Posterior cingulate gyrus (tissue), 11 donors: ENCODE measurements at regions of chr4 and their contacts with region 1.

Region 1: GRCh38 chr4:25159884-25160713 is at the start of gene SEPSECS:
- DNase-seq: peak; percentile 86 to 98 (median 92)

Region 2: DNA sequence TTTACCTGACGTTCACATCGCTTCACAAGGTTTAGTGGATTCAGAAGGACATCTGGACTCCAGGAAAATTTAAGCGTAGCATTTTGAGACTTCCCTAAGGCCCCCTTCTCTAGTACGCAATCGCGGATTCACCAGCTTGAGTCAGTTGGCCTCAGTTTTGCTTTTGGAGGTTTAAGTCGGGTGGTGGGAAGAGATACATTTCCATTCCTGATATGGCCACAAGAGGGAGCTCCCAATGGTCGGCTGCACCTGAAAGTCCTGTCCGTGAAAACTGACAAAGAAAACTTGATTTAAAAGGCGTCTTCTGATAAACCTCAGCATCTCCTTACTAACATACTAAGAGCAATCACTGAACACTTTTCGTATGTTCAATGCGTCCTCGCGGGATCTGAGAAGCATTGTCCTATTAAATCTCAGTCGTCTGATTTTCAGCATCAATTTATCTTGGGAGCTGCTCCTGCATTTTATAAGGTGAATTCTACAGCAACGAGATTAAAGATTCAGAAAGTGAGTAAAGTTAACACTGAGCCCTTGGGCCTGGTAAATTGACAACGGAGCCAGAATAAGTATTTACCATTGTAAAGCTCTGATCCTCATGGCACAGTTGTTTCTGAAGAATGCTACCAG is 179.9 kb before region 1 on chr4:
- intact Hi-C with region 1: loop called (anchors 5 kb)
- DNase-seq: peak in 6 of 10 donors; percentile 31 to 87 (median 42)

Region 3: GRCh38 chr4:25144870-25145481 is 15.1 kb before region 1 on chr4:
- intact Hi-C with region 1: no loop called
- DNase-seq: no peak

Region 4: GRCh38 chr4:25234390-25235370 is 74.6 kb after region 1 on chr4:
- intact Hi-C with region 1: loop called (anchors 5 kb)
- DNase-seq: peak; percentile 21 to 92 (median 42)

Region 5: GRCh38 chr4:25312496-25313200 is 152.5 kb after region 1 on chr4 and contains the start of gene ZCCHC4:
- intact Hi-C with region 1: loop called (anchors 1 kb)
- DNase-seq: peak; percentile 84 to 98 (median 90)

Region 6: DNA sequence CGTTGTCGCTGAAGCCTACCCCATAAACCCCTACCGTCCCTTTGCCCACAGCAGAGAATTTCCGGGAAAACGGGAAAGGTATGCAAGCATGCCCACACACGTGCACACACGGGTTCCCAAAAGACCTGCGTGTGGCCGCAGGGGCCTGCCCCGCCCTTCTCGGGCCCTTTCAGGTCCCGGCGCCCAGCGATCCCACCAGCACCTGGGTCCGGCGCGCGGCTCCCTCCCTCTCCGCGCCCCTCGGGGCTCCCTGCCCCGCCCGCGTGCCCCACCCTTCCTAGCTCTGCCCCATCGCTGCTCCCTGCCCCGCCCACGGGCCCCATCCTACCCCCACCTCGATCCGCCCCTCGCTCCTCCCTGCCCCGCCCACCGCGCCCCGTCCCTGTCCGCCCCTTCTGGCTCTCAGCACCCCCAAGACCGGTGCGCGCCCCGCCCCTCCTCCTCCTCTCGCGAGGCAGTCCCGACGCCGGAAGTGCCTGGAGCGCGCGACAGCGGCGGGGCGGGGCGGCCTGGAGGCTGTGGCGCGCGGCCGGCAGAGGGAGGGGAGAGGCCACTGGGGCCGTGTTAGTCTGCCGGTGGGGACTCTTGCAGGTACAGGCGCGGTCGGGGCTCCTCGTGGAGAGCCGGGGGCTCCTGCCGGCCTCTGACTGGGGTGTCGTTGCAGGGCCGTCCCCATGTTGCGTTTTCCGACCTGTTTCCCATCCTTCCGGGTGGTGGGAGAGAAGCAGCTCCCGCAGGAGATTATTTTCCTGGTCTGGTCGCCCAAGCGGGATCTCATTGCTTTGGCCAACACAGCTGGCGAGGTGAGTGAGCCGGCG is 216.9 kb after region 1 on chr4 and contains the start of gene ANAPC4:
- intact Hi-C with region 1: no loop called
- DNase-seq: peak; percentile 77 to 98 (median 89)